ENCODE measurements at regions of chr7 and their contacts with region 1.

Region 1: GRCh38 chr7:102433219-102434038 is at the start of gene ORAI2:
- DNase-seq: peak; percentile 78
- H3K4me3 Mint-ChIP-seq: peak within 1 kb of the TSS; percentile 93
- H3K27ac Mint-ChIP-seq: peak within 1 kb of the TSS; percentile 89
- H3K4me1 Mint-ChIP-seq: peaks cover 34% of the 10 kb centered on the region
- H3K27me3 Mint-ChIP-seq: no peaks in the 10 kb centered on the region
- total RNA-seq, gene ORAI2: 53.5 and 53.8 TPM in 2 replicates

Region 2: DNA sequence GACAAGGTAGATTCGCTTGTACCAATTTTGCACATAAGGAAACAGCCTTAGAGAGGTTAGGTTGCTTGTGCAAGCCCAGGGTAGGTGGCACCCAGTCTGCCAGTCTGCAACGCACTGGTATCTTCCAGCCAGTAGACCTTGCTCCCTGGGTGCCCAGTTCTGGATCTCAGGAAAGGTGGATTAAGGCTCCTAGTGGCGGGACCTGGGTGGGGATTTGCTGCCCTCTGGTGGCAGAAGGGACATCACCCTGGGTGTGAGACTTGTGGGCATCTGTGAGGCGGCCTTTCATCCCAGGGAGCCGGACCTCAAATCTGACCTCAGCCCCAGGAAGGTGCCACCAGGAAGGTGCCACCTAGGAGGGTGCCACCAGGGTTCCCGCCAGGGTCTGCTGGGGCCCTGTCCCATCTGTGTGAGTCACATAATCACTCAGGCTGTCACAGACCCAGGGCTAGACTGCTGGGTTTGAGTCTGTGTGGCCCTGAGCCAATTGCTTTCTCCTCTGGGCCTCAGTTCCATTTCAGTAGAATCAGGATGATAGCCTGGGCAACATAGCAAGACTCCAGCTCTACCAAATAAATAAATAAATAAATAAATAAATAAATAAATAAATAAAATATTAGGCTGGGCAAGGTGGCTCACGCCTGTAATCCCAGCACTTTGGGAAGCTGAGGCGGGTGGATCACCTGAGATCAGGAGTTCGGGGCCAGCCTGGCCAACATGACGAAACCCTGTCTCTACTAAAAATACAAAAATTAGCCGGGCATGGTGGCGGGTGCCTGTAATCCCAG is 42.5 kb before region 1 on chr7:
- intact Hi-C with region 1: no loop called
- DNase-seq: peak; percentile 58
- H3K4me3 Mint-ChIP-seq: no peak overlapping the region
- H3K27ac Mint-ChIP-seq: no peak overlapping the region
- H3K4me1 Mint-ChIP-seq: peaks cover 6% of the 10 kb centered on the region
- H3K27me3 Mint-ChIP-seq: no peaks in the 10 kb centered on the region

Region 3: GRCh38 chr7:102415685-102416299 is 17.6 kb before region 1 on chr7:
- intact Hi-C with region 1: loop called (anchors 2 kb)
- DNase-seq: peak; percentile 60
- H3K4me3 Mint-ChIP-seq: peak overlapping the region; percentile 68
- H3K27ac Mint-ChIP-seq: peak overlapping the region; percentile 97
- H3K4me1 Mint-ChIP-seq: peaks cover 60% of the 10 kb centered on the region
- H3K27me3 Mint-ChIP-seq: no peaks in the 10 kb centered on the region

Region 4: GRCh38 chr7:102450242-102450641 is 16.8 kb after region 1 on chr7:
- intact Hi-C with region 1: no loop called
- DNase-seq: no peak
- H3K4me3 Mint-ChIP-seq: no peak overlapping the region
- H3K27ac Mint-ChIP-seq: no peak overlapping the region
- H3K4me1 Mint-ChIP-seq: no peaks in the 10 kb centered on the region
- H3K27me3 Mint-ChIP-seq: no peaks in the 10 kb centered on the region

Region 5: GRCh38 chr7:103074519-103075336 is 641.3 kb after region 1 on chr7 and contains the starts of genes ARMC10 and FBXL13:
- intact Hi-C with region 1: no loop called
- DNase-seq: peak; percentile 83
- H3K4me3 Mint-ChIP-seq: peak within 1 kb of the TSS; percentile 93
- H3K27ac Mint-ChIP-seq: peak within 1 kb of the TSS; percentile 90
- H3K4me1 Mint-ChIP-seq: peaks cover 26% of the 10 kb centered on the region
- H3K27me3 Mint-ChIP-seq: peaks cover 2% of the 10 kb centered on the region
- total RNA-seq, gene ARMC10: 46.9 and 49.1 TPM in 2 replicates
- total RNA-seq, gene FBXL13: 0.41 and 0.76 TPM in 2 replicates

Measured in activated T-helper 2 cell treated with anti-CD3 and anti-CD28 coated beads, Interferon-gamma antibody, Interleukin-2, Interleukin-4, amounts not matched to agents 10 μg/mL and 5 μg/mL and 100 μg/mL, durations not matched to agents 14 hours and 24 hours and 36 hours (primary cell).